Common myeloid progenitor, CD34-positive (primary cell): ENCODE measurements at regions of chr12 and their contacts with region 1.

Region 1: DNA sequence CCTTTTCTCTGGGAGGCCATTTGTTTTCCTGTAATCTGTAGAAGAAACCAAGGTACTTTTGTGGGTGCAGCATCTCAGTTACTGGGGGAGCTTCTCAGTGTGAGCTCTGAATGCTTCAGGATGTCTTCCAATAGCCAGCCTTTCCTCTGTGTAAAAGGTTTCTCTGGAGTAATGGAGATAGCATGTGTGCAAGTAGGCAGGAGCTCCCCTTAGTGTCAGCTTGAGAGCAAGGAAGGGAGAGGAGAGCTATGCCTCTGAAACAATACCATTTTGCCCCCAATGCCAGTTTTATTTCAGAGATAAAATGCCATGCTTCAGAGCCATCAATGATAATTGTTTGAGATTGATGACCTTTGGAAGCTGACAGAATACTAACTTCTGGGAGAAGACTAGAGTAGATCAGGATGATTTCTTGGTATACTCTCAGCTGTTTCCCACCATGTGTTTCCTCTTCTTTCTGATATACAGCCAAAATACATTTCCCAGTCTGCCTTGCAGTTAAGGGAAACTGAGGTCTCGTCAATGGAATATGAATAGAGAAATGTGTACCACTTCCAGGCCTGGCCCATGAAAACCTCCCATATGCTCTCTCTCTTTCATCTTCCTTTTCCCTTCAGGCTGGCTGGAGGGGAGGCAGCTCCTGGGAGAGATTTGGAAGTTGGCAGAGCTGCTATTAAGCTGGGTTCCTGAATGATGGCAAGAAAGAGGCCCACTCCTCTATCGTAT is 125.7 kb downstream of the CRADD start:
- DNase-seq: peak; percentile 18 to 47 (median 43)
- H3K4me3 ChIP-seq: peak overlapping the region in 5 of 7 experiments; percentile 19 to 73 (median 52)
- H3K27ac ChIP-seq: peak overlapping the region; percentile 48 to 81
- H3K4me1 ChIP-seq: peaks cover 7 to 34% (median 12%) of the 10 kb centered on the region in 4 experiments
- H3K27me3 ChIP-seq: no peaks in the 10 kb centered on the region

Region 2: GRCh38 chr12:93742110-93742934 is 60.5 kb before region 1 on chr12:
- CTCF ChIA-PET with region 1: interaction called, 10 read pairs
- POLR2A ChIA-PET with region 1: no interaction called
- DNase-seq: peak; percentile 81 to 86 (median 83)
- H3K4me3 ChIP-seq: peak overlapping the region; percentile 44 to 98 (median 83)
- H3K27ac ChIP-seq: peak overlapping the region; percentile 87 to 92
- H3K4me1 ChIP-seq: peaks cover 16 to 68% (median 45%) of the 10 kb centered on the region in 4 experiments
- H3K27me3 ChIP-seq: no peaks in the 10 kb centered on the region

Region 3: GRCh38 chr12:93748672-93749383 is 54.0 kb before region 1 on chr12:
- CTCF ChIA-PET with region 1: interaction called, 10 read pairs
- POLR2A ChIA-PET with region 1: no interaction called
- DNase-seq: no peak
- H3K4me3 ChIP-seq: no peak overlapping the region
- H3K27ac ChIP-seq: no peak overlapping the region
- H3K4me1 ChIP-seq: peaks cover 3 to 34% (median 22%) of the 10 kb centered on the region in 4 experiments
- H3K27me3 ChIP-seq: no peaks in the 10 kb centered on the region